HCT116 (cell line): ENCODE measurements at regions of chr1 and their contacts with region 1.

Region 1: GRCh38 chr1:171313835-171314320 is at the start of gene FMO4:
- DNase-seq: peak; percentile 97
- ATAC-seq: peak; percentile 100
- H3K4me3 ChIP-seq: peak within 1 kb of the TSS; percentile 31 to 55
- H3K27ac ChIP-seq: no peak within 1 kb of the TSS; the same call in 1 of the 2 replicates
- H3K4me1 ChIP-seq: peaks cover 7 to 12% of the 10 kb centered on the region in 2 experiments; a peak in 3 of 4 replicates
- H3K27me3 ChIP-seq: no peaks in the 10 kb centered on the region
- CTCF ChIP-seq: peak; percentile 81 to 98 (median 89)
- POLR2A ChIP-seq: no peak
- RAD21 ChIP-seq: peak; percentile 85
- total RNA-seq, gene FMO4: 1.4 TPM

Region 2: DNA sequence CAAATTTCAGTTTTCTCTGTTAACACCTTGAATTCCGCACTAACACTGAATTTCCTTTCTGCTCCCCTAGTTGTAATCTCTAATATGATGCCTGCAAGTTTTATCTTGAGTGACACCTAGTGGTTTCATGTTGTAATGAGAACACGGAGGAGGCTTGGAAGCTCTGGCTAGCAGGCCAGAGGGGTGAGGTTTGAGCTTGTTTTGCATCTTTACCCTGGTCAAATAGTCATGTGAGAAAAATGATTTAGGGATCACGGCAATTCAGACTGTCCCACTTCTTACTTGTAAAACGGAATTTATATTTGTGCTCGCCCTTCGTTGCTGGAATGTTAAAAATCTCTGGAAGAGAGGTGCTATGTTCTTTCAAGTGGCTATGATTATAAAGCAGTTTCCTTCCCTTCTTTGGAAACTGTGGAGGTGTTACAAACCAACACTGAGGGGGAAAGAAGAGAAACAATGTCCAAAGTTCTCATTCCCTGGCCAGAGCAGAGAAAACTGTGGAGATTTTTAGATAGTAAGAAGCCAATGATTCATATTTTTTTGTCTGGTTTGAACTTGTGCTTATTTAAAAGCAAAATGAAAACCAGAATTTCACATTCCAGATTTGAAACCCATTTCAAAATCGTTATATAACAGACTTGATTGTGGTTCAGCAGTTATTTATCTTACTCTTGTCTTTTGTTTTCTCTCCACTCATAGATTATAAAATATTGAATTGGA is 383.9 kb before region 1 on chr1:
- CTCF ChIA-PET with region 1: interaction called, 10 read pairs
- POLR2A ChIA-PET with region 1: no interaction called
- RAD21 ChIA-PET with region 1: no interaction called
- intact Hi-C with region 1: no loop called
- DNase-seq: peak; percentile 50
- ATAC-seq: peak; percentile 98
- H3K4me3 ChIP-seq: no peak overlapping the region
- H3K27ac ChIP-seq: no peak overlapping the region
- H3K4me1 ChIP-seq: no peaks in the 10 kb centered on the region
- H3K27me3 ChIP-seq: no peaks in the 10 kb centered on the region
- CTCF ChIP-seq: peak; percentile 63 to 73 (median 66); a peak in 5 of 6 replicates
- POLR2A ChIP-seq: no peak
- RAD21 ChIP-seq: peak; percentile 73

Region 3: DNA sequence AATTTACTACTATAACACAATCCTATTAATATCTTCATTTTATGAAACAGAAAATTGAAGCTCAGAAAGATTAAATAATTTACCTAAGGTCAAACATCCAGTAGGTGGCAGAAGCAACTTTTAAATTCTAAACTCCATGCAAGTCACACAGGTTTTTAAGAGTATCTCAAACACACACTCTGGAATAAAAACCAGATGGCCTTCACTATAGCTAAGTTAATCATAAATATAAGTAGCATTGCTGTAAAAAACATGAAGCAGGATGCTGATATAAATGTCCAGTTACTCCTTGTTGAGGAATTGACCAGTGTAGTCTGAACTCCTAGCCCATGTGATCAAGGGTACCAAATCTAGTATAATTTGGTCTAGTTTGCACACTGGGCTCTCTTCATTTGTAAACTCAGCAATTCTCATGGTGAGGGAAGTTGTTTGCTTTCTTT is 232.5 kb before region 1 on chr1:
- CTCF ChIA-PET with region 1: interaction called, 52 read pairs
- POLR2A ChIA-PET with region 1: no interaction called
- RAD21 ChIA-PET with region 1: interaction called in 1 of 2 experiments, 9 read pairs
- intact Hi-C with region 1: loop called (anchors 1 kb)
- DNase-seq: peak; percentile 15
- ATAC-seq: no peak
- H3K4me3 ChIP-seq: no peak overlapping the region
- H3K27ac ChIP-seq: no peak overlapping the region
- H3K4me1 ChIP-seq: no peaks in the 10 kb centered on the region
- H3K27me3 ChIP-seq: no peaks in the 10 kb centered on the region
- CTCF ChIP-seq: peak; percentile 21 to 54 (median 47); a peak in 4 of 6 replicates
- POLR2A ChIP-seq: no peak
- RAD21 ChIP-seq: peak; percentile 61

Region 4: DNA sequence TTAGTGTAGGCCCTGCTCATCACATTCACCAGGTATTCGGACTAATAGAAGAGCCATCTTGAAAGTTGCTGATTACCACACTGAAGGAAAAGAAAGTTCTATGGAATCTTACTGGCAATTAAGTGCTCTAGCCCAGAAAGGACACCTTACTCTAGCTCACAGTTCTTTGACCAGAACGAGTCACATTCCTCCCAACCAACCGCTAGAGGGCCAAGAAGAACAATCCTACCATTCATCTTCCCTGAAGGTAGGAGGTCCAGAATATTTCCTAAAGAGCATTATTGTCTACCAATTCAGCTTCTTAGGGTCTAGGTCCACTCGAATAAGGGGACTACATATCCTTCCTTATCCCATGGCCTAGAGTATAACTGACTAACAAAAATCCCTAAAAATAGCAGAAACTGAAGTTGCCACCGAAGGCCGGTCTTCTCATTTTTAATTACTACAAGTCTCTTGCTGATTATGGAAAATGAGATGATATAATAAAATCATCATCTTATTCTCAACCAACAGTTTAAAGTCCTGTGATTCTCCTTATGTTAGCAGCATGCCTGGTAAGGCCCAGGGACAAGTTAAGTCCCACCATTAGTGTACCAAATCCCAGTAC is 68.3 kb before region 1 on chr1:
- CTCF ChIA-PET with region 1: interaction called, 20 read pairs
- POLR2A ChIA-PET with region 1: no interaction called
- RAD21 ChIA-PET with region 1: interaction called, 6 to 13 read pairs
- intact Hi-C with region 1: loop called (anchors 5 kb)
- DNase-seq: peak; percentile 45
- ATAC-seq: peak; percentile 93
- H3K4me3 ChIP-seq: no peak overlapping the region
- H3K27ac ChIP-seq: no peak overlapping the region
- H3K4me1 ChIP-seq: no peaks in the 10 kb centered on the region
- H3K27me3 ChIP-seq: no peaks in the 10 kb centered on the region
- CTCF ChIP-seq: peak; percentile 66 to 88 (median 82)
- POLR2A ChIP-seq: no peak
- RAD21 ChIP-seq: peak; percentile 64

Region 5: GRCh38 chr1:171329251-171329650 is 15.4 kb after region 1 on chr1:
- CTCF ChIA-PET with region 1: interaction called, 11 read pairs
- POLR2A ChIA-PET with region 1: no interaction called
- RAD21 ChIA-PET with region 1: no interaction called
- intact Hi-C with region 1: no loop called
- DNase-seq: no peak
- ATAC-seq: no peak
- H3K4me3 ChIP-seq: no peak overlapping the region
- H3K27ac ChIP-seq: no peak overlapping the region
- H3K4me1 ChIP-seq: no peaks in the 10 kb centered on the region
- H3K27me3 ChIP-seq: no peaks in the 10 kb centered on the region
- CTCF ChIP-seq: no peak
- POLR2A ChIP-seq: no peak
- RAD21 ChIP-seq: no peak

Region 6: DNA sequence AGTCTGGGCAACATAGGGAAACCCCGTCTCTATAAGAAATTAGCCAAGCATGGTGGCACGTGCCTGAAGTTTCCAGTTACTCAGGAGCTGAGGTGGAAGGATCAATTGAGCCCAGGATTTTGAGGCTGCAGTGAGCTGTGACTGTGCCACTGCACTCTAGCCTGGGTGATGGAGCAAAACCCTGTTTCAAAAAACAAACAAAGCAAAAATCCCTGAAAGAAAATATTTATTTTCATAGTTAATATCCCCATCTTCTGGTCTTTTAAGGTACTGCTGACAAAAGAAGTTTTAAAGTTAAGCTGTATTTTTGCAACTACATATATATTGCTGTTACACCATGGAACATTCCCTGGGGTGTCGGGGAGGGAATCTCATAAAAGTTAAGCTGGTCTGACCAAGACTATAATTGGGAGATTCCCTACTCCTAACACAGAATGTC is 402.0 kb after region 1 on chr1:
- CTCF ChIA-PET with region 1: interaction called, 12 read pairs
- POLR2A ChIA-PET with region 1: no interaction called
- RAD21 ChIA-PET with region 1: no interaction called
- intact Hi-C with region 1: no loop called
- DNase-seq: no peak
- ATAC-seq: peak; percentile 49
- H3K4me3 ChIP-seq: no peak overlapping the region
- H3K27ac ChIP-seq: no peak overlapping the region
- H3K4me1 ChIP-seq: no peaks in the 10 kb centered on the region
- H3K27me3 ChIP-seq: no peaks in the 10 kb centered on the region
- CTCF ChIP-seq: peak; percentile 23 to 53 (median 50); a peak in 4 of 6 replicates
- POLR2A ChIP-seq: no peak
- RAD21 ChIP-seq: peak; percentile 60

Region 7: DNA sequence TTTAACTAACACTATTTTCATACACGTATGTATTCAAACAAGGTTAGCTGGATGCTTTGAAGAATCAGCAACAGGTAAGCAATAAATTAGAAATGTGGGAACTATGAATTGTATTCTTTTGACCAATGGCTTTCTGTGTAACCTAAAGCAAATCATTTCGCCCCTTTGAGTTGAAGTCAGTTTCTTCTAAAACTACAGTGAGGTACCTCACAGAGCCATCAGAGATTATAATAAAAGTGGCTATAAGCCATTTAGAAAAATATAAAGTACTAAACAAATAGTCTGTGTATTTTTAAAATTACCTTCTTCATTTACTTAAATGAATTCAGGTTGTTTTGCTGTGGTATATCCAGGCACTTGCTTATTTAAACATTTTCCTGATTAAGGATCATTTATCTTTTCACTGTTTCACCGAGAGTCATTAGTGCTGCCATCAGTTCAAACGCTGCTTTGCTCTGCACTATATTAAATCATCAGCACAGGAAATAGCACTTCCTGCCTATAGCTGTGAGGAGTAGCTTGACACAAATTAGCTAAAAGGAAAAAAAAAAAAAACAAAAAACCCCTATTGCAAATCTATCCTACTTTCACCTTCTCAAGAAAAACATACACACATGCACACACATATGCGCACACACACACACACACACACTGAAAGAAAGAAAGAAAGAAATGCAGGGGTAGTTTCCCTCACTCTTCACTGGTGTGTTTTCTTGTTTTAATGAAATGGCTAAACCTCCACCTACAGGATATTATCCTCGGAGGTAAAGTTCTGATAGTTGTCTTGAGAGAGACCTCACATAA is 1066.8 kb after region 1 on chr1:
- CTCF ChIA-PET with region 1: no interaction called
- POLR2A ChIA-PET with region 1: no interaction called
- RAD21 ChIA-PET with region 1: no interaction called
- intact Hi-C with region 1: no loop called
- DNase-seq: no peak
- ATAC-seq: no peak
- H3K4me3 ChIP-seq: no peak overlapping the region
- H3K27ac ChIP-seq: no peak overlapping the region
- H3K4me1 ChIP-seq: no peaks in the 10 kb centered on the region
- H3K27me3 ChIP-seq: no peaks in the 10 kb centered on the region
- CTCF ChIP-seq: no peak
- POLR2A ChIP-seq: no peak
- RAD21 ChIP-seq: no peak